A549 (cell line): ENCODE measurements at regions of chr7 and their contacts with region 1.

Region 1: DNA sequence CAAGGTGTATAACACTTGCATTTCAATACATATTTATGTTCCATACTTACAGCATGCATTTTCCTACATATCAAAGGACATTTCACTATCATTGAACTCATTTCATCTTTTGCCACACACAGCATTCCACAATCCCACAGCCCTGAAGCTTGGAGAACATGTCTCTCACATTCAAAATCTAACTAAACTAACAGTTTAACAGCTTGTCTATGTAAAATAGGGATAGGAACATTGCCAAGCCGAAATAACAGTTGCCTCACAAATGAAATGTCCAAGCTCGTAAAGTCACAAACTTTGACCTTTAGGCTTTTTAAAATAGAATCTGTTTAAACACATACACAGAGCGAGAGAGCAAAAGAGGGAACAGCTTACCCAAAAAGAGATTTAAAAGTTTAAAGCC is 65.3 kb downstream of the HGF start:
- DNase-seq: no peak
- ATAC-seq: no peak
- H3K4me3 ChIP-seq: no peak overlapping the region
- H3K27ac ChIP-seq: no peak overlapping the region
- H3K4me1 ChIP-seq: peaks cover 12% of the 10 kb centered on the region
- CTCF ChIP-seq: no peak
- EP300 ChIP-seq: no peak
- POLR2A ChIP-seq: no peak
- RAD21 ChIP-seq: no peak

Region 2: DNA sequence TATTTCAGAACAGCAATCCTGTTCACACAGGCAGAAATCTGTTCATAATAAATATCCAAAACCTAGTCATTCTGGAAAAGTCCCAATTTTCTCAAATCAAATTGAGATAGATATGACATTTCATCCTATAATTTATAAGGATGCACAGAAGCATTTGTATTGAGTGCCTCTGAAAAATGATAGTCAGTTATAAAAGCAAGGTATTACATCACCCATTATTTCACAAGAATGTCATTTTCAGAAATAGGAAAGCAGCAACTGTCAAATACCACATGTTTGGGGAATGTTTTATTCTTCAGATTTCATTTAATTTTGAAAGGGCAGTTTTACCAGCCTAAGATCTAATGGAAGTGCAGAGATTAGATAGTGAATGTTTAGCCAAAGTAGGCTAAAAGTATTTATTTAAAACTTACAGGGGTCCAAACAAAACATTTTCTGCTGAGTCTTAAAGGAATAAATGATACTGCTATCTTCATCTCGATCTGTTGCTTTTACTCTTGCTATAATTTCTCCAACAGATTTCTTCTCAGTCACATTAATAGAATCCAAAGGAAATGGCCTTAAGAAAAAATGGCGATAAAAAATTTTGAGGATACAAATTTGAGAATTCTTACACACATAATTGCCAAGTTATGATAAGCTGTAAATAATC is 120.6 kb before region 1 on chr7:
- CTCF ChIA-PET with region 1: no interaction called
- POLR2A ChIA-PET with region 1: no interaction called
- DNase-seq: no peak
- ATAC-seq: no peak
- H3K4me3 ChIP-seq: no peak overlapping the region
- H3K27ac ChIP-seq: no peak overlapping the region
- H3K4me1 ChIP-seq: no peaks in the 10 kb centered on the region
- CTCF ChIP-seq: no peak
- EP300 ChIP-seq: no peak
- POLR2A ChIP-seq: no peak
- RAD21 ChIP-seq: no peak

Region 3: GRCh38 chr7:81715984-81716588 is 11.5 kb after region 1 on chr7:
- CTCF ChIA-PET with region 1: interaction called, 13 read pairs
- POLR2A ChIA-PET with region 1: no interaction called
- DNase-seq: peak in 1 of 2 experiments; percentile 75
- ATAC-seq: peak; percentile 85 to 94
- H3K4me3 ChIP-seq: no peak overlapping the region
- H3K27ac ChIP-seq: no peak overlapping the region
- H3K4me1 ChIP-seq: peaks cover 9% of the 10 kb centered on the region; the same call in 2 of the 3 replicates
- CTCF ChIP-seq: peak; percentile 76
- EP300 ChIP-seq: no peak
- POLR2A ChIP-seq: no peak
- RAD21 ChIP-seq: peak; percentile 92 to 93